Activated CD4-positive, alpha-beta T cell treated with anti-CD3 and anti-CD28 coated beads for 36 hours (primary cell): ENCODE measurements at regions of chr10 and their contacts with region 1.

Region 1: GRCh38 chr10:123994417-123995081 is 98.8 kb downstream of the CHST15 start:
- DNase-seq: peak; percentile 88
- ATAC-seq: peak; percentile 77
- H3K4me3 Mint-ChIP-seq: peak overlapping the region; percentile 12
- H3K27ac Mint-ChIP-seq: no peak overlapping the region
- H3K4me1 Mint-ChIP-seq: peaks cover 7% of the 10 kb centered on the region
- H3K27me3 Mint-ChIP-seq: peaks cover 44% of the 10 kb centered on the region

Region 2: DNA sequence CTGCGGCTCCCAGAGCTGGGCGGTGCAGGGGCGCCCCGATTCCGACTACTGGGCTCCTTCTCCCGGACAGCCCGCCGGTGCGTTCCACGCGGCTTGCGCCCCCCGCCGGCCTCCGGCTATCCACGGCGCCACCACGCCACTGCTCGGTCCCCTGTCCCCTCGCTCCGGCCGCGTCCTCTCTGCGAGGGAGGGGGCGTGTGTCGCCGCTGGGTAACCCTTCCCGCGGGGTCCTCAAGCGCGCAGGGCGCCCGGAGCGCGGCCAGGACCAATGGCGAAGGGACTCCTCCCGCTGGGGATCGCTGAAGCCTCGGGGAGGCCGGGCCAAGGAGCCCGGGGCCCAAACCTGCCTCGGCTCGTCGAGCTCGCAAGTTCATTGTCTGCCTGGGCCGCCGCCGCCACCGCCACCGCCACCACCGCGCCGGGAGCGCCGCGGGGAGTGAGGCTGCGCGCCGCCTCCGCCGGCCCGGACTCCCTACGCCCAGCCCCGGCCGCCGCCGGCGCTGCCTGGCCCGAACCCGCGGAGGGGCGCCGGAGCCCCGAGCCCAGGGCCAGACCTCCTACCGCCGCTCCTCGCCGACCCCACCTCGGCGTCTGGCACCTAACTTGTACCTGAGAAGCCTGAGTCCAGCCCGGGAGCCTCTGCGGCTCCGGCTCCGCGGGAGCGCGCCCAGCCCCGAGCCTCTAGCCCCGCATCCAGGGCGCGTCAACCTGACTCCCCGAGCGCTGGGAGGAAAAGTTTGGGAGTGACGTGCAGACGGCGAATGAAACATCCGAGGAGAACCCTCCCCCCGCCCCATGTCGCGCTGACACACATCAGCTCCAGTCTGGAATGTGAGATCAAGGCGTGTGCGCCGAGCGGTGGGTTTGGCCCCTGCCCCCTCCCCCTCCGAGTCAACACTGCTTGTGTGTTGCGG is 98.6 kb after region 1 on chr10 and contains the start of gene CHST15:
- CTCF ChIA-PET with region 1: interaction called, 5 read pairs
- POLR2A ChIA-PET with region 1: no interaction called
- intact Hi-C with region 1: loop called in 1 of 2 experiments (anchors 2 kb)
- DNase-seq: peak; percentile 18
- ATAC-seq: peak; percentile 14
- H3K4me3 Mint-ChIP-seq: peak within 1 kb of the TSS; percentile 54
- H3K27ac Mint-ChIP-seq: no peak within 1 kb of the TSS
- H3K4me1 Mint-ChIP-seq: peaks cover 2% of the 10 kb centered on the region
- H3K27me3 Mint-ChIP-seq: peaks cover 51% of the 10 kb centered on the region
- total RNA-seq, gene CHST15: 0.40 to 0.43 TPM

Region 3: GRCh38 chr10:124152916-124153826 is 158.6 kb after region 1 on chr10:
- CTCF ChIA-PET with region 1: interaction called, 3 read pairs
- POLR2A ChIA-PET with region 1: no interaction called
- intact Hi-C with region 1: loop called in 1 of 2 experiments (anchors 5 kb)
- DNase-seq: peak; percentile 72
- ATAC-seq: peak; percentile 85
- H3K4me3 Mint-ChIP-seq: peak overlapping the region; percentile 0
- H3K27ac Mint-ChIP-seq: no peak overlapping the region
- H3K4me1 Mint-ChIP-seq: no peaks in the 10 kb centered on the region
- H3K27me3 Mint-ChIP-seq: peaks cover 11% of the 10 kb centered on the region

Region 4: DNA sequence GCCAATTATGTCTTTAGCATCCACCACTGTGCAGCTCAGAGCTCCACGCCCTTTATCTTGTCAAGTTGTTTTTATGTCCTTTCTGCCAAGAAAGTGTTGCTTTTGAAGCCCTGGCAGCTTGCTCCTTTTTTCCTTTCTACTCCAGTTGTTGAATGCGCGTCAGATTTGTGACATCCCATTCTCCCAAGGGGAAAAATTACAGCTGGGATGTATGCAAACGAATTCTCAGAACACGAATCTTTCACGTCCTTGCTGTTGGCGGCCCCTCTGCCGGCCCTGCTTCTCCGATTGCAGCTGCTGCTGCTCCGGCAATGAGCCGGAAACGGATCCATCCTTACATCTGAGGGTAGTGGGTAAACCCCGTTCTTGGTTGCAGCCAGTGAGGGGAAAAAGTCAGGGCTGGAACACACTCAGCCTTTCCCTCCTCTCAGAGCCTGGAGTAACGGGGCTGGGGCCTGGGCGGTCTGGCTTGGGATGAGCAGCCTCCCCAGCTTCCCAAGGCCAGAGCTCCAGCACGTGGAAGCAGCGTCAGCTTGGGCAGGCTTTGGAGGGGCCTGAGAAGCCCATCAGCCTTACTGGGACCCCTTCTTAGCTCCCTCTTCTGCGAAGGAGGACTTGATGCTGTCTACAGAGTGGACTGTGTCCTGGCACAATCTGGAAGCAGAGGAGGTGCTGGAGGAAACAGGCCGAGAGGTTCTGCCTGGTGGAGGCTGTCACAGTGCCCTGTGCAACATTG is 177.8 kb after region 1 on chr10:
- CTCF ChIA-PET with region 1: no interaction called
- POLR2A ChIA-PET with region 1: no interaction called
- intact Hi-C with region 1: no loop called
- DNase-seq: no peak
- ATAC-seq: no peak
- H3K4me3 Mint-ChIP-seq: no peak overlapping the region
- H3K27ac Mint-ChIP-seq: no peak overlapping the region
- H3K4me1 Mint-ChIP-seq: peaks cover 4% of the 10 kb centered on the region
- H3K27me3 Mint-ChIP-seq: peaks cover 3% of the 10 kb centered on the region

Region 5: DNA sequence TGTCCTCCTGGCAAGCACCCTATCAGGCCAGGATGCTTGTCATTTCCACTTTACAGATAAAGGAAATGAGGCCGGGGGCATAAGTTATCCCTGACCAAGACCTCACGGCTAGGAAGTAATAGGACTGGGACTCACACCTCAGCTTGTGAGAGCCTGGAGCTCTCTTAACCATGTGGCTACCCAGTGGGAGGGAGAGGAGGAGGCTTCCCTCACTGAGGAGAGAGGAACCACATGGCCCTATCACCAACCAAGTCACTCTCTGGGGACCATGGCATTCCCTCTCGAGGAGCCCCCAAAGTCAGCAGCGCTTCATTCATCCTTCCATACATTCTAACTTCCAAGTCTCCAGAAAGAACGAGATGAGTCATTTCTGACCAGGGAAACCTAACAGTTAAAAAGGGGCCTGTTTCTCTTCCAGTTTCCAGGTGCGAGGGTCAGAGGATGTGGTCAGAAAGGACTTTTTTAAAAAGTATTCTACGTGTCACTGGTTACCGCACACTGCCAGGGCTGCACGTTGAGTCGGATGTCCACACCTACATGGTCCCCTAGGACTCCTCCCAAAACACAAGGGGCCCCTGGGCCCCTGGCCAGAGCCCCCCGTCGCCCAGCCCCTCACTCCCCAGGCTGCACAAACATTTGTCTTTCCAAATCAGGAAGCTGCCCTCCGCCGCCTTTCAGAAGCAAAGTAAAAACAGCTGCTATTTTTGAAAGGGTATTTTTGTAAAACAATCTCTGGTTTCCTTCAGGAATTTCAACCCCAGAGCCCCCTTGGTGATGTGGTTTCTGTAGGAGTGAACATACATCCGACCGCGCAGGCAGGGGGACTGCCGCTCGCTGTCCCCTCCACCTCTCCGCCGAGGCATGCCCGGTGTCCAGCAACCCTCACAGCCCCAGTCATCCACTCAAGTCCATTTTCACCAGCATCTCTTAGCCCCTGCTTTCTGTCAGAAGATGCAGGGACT is 227.1 kb after region 1 on chr10:
- CTCF ChIA-PET with region 1: interaction called, 9 read pairs
- POLR2A ChIA-PET with region 1: no interaction called
- intact Hi-C with region 1: loop called in 1 of 2 experiments (anchors 10 kb)
- DNase-seq: no peak
- ATAC-seq: no peak
- H3K4me3 Mint-ChIP-seq: no peak overlapping the region
- H3K27ac Mint-ChIP-seq: no peak overlapping the region
- H3K4me1 Mint-ChIP-seq: no peaks in the 10 kb centered on the region
- H3K27me3 Mint-ChIP-seq: peaks cover 8% of the 10 kb centered on the region

Region 6: GRCh38 chr10:124231168-124232155 is 236.9 kb after region 1 on chr10:
- CTCF ChIA-PET with region 1: interaction called, 7 read pairs
- POLR2A ChIA-PET with region 1: no interaction called
- intact Hi-C with region 1: loop called (anchors 5 to 10 kb)
- DNase-seq: peak; percentile 85
- ATAC-seq: peak; percentile 65
- H3K4me3 Mint-ChIP-seq: peak overlapping the region; percentile 31
- H3K27ac Mint-ChIP-seq: no peak overlapping the region
- H3K4me1 Mint-ChIP-seq: no peaks in the 10 kb centered on the region
- H3K27me3 Mint-ChIP-seq: no peaks in the 10 kb centered on the region

Region 7: GRCh38 chr10:124259139-124259825 is 264.7 kb after region 1 on chr10:
- CTCF ChIA-PET with region 1: no interaction called
- POLR2A ChIA-PET with region 1: no interaction called
- intact Hi-C with region 1: loop called in 1 of 2 experiments (anchors 5 kb)
- DNase-seq: peak; percentile 46
- ATAC-seq: no peak
- H3K4me3 Mint-ChIP-seq: no peak overlapping the region
- H3K27ac Mint-ChIP-seq: no peak overlapping the region
- H3K4me1 Mint-ChIP-seq: no peaks in the 10 kb centered on the region
- H3K27me3 Mint-ChIP-seq: no peaks in the 10 kb centered on the region

Region 8: DNA sequence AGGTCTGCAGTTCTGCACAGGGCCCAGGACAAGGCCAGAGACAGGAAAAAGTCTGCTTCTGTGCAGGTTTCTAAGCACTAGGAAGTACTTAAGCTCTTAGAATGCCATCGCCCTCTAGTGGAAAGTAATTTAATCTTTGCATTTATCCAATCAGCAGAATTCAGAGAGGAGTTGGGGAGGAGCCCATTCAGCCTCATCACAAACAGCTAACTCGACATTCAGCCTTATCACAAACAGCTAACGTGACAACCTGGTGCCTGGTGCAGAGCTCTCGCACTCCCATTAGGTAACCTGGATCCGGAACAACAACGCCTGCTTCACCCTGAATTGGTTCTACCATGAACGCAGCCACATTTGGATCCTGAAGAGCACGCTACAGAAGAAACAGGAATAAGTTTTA is 409.0 kb after region 1 on chr10:
- CTCF ChIA-PET with region 1: interaction called, 18 read pairs
- POLR2A ChIA-PET with region 1: no interaction called
- intact Hi-C with region 1: loop called in 1 of 2 experiments (anchors 1 kb)
- DNase-seq: peak; percentile 27
- ATAC-seq: peak; percentile 100
- H3K4me3 Mint-ChIP-seq: no peak overlapping the region
- H3K27ac Mint-ChIP-seq: peak overlapping the region; percentile 16
- H3K4me1 Mint-ChIP-seq: peaks cover 8% of the 10 kb centered on the region
- H3K27me3 Mint-ChIP-seq: no peaks in the 10 kb centered on the region